Activated CD4-positive, alpha-beta T cell treated with anti-CD3 and anti-CD28 coated beads, Interleukin-2, amount 10 ng/mL, durations not matched to agents 24 days and 14 days (primary cell): ENCODE measurements at regions of chr2 and their contacts with region 1.

Region 1: DNA sequence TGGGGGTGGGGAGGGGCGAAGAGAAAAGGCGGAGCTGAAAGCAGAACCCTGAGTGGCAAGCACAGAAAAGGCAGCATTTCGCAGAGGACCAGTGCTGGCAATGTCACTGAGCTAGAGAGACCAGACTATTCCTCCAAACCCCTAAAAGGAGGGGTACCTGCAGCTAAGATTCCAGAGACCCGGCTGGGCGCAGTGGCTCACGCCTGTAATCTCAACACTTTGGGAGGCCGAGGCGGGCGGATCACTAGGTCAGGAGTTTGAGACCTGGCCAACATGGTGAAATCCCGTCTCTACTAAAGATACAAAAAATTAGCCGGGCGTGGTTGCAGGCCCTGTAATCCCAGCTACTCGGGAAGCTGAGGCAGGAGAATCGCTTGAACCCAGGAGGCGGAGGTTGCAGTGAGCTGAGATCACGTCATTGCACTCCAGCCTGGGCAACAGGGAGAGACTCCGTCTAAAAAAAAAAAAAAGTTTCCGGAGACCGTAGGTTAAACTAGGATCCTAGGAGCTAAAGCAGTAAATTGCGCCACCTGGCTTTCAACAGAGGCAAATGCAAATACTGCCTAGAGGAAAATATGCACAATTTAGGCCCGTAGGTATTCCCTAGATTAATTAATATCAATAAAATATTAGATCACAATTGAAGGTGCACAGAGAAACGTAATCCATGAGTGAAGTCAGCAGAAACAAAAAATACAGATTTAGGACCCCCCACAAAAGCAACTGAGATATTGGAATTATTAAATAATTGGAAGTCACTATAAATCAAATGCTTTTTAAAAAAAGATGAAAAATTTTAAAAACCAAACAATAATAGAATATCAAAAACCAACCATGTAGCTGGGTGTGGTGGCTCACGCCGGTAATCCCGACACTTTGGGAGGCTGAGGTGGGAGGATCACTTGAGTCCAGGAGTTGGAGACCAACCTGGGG is 4.9 kb downstream of the UCN start:
- DNase-seq: peak; percentile 85
- H3K4me3 Mint-ChIP-seq: peak overlapping the region; percentile 71
- H3K27ac Mint-ChIP-seq: no peak overlapping the region
- H3K4me1 Mint-ChIP-seq: peaks cover 5% of the 10 kb centered on the region
- H3K27me3 Mint-ChIP-seq: peaks cover 19% of the 10 kb centered on the region

Region 2: DNA sequence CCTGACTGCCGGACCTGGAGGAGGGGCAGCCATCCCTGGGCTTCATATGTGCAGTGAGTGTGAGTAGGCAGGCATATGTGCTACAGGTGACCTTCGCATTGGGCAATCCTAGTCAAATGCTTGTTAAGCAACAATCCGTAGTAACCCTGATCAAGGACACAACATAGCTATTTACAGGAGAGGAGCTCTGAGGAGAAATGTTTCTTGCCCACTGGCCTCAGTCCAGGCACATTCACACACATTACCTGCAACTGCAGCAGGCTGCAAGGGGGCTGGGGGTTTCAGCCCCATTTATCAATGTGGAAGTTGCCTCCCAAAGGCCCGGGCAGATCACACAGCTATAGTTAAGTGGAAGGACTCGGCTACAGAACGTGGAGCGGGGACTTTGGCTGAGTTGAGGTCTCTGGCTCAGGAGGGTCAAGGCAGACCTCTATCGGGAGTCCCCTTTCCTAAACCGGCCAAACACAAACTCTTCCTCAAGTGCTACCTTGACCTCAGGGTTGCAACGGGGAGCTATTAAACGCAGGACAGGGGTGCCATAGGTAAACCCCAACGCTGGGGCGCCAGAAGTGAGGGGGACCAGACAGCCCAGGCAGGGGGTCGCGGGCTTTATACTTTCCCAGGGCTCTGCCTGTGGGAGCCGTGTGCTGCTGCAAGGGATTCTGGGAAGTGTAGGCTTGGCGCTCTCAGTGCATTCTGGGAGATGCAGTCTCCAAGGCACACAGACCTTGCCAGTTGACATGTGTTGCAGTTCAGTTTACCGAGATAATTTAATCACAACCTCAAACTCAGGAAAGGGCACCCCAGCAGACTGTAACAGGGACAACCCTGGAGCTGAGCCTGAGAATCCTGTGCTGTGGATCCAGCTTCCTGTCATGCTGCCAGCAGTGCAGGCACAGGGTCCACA is 207.4 kb before region 1 on chr2:
- intact Hi-C with region 1: loop called (anchors 1 kb)
- DNase-seq: peak; percentile 85
- H3K4me3 Mint-ChIP-seq: peak overlapping the region; percentile 71
- H3K27ac Mint-ChIP-seq: peak overlapping the region; percentile 48
- H3K4me1 Mint-ChIP-seq: peaks cover 15% of the 10 kb centered on the region
- H3K27me3 Mint-ChIP-seq: no peaks in the 10 kb centered on the region

Region 3: DNA sequence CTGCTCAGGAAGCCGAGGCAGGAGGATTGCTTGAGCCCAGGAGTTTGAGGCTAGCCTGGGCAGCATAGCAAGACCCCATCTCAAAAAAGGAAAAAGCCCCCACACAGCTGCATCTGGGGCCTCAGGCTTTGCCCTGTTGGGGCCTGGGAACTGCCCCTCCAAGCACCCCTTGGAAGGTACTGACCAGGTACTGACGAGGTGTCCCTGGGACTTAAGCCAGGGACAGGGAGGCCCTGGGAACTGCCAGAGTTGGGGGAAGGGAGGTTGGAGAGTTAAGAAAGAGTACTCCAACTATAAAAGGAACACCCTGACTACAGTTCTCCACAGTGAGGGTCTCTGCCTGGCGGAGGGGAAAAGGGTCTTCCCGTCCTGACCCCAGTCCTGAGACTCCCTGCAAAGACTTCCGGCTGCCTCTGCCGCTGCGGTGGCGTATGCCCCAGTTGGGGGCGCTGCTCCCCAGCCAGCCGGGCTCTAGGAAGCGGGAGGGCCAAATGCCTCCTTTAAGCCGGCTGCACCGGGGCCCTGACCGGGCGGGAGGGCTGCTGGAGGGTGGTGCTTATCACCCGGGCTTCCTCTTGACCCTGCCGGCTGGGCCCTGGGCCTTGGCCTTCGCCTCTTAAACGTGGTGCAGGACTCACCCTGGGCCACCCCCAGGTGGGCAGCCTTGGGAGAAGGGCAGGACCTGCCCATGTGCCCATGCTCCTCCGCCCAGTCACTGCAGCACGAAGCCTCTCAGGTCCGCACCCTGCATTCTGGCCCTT is 53.3 kb before region 1 on chr2:
- intact Hi-C with region 1: loop called (anchors 1 kb)
- DNase-seq: peak; percentile 89
- H3K4me3 Mint-ChIP-seq: no peak overlapping the region
- H3K27ac Mint-ChIP-seq: no peak overlapping the region
- H3K4me1 Mint-ChIP-seq: no peaks in the 10 kb centered on the region
- H3K27me3 Mint-ChIP-seq: peaks cover 11% of the 10 kb centered on the region

Region 4: DNA sequence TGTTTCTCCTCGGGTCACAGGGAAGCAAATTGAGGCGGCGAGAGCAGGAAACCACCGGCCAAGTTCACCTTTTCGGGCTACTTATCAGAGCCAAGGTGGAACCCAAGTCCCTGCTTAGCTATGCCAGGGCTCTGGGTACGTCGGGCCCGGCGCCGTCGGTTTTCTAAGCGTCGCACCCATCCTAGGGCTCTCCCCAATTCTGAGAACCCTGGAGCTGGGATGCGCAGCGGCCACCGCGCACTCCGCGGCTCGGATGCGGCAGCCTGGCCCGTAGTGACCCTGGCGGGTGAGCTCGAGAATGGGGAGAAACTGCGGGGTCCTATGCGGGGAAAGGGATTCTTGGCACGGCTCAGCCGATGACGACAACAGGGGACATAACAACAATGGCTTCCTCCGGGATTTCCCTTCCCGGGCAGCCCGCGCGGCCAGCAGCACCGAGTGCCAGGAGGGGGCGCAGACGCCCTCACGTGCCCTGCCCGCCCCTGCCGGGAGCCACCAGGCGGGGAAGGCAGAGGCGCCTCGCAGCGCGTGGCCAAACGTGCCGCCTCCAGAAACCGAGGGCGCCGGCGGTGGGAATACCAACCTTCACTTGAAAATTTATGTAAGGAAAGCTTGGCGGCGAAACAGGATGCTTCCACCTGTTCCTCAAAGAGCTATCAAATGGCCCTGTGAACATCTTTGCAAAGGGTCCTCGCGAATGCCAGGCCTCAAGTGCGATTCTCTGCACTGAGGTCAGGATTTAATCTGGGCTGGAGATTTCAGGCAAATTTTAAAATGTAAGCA is 38.4 kb before region 1 on chr2:
- intact Hi-C with region 1: loop called (anchors 2 kb)
- DNase-seq: peak; percentile 83
- H3K4me3 Mint-ChIP-seq: peak overlapping the region; percentile 74
- H3K27ac Mint-ChIP-seq: no peak overlapping the region
- H3K4me1 Mint-ChIP-seq: peaks cover 25% of the 10 kb centered on the region
- H3K27me3 Mint-ChIP-seq: peaks cover 44% of the 10 kb centered on the region

Region 5: GRCh38 chr2:27322766-27323595 is 19.6 kb after region 1 on chr2 and contains the start of gene MPV17:
- intact Hi-C with region 1: no loop called
- DNase-seq: peak; percentile 96
- H3K4me3 Mint-ChIP-seq: peak within 1 kb of the TSS; percentile 99
- H3K27ac Mint-ChIP-seq: peak within 1 kb of the TSS; percentile 98
- H3K4me1 Mint-ChIP-seq: peaks cover 15% of the 10 kb centered on the region
- H3K27me3 Mint-ChIP-seq: no peaks in the 10 kb centered on the region
- total RNA-seq, gene MPV17: 86.8 and 89.1 TPM in 2 replicates